Activated CD4-positive, alpha-beta T cell treated with anti-CD3 and anti-CD28 coated beads, Interleukin-2, amount 10 ng/mL, durations not matched to agents 7 days and 5 days (primary cell): ENCODE measurements at regions of chr1 and their contacts with region 1.

Region 1: GRCh38 chr1:236156512-236157208 is 14.3 kb downstream of the GPR137B start:
- DNase-seq: peak; percentile 18
- H3K4me3 Mint-ChIP-seq: no peak overlapping the region
- H3K27ac Mint-ChIP-seq: no peak overlapping the region
- H3K4me1 Mint-ChIP-seq: peaks cover 16% of the 10 kb centered on the region
- H3K27me3 Mint-ChIP-seq: no peaks in the 10 kb centered on the region

Region 2: DNA sequence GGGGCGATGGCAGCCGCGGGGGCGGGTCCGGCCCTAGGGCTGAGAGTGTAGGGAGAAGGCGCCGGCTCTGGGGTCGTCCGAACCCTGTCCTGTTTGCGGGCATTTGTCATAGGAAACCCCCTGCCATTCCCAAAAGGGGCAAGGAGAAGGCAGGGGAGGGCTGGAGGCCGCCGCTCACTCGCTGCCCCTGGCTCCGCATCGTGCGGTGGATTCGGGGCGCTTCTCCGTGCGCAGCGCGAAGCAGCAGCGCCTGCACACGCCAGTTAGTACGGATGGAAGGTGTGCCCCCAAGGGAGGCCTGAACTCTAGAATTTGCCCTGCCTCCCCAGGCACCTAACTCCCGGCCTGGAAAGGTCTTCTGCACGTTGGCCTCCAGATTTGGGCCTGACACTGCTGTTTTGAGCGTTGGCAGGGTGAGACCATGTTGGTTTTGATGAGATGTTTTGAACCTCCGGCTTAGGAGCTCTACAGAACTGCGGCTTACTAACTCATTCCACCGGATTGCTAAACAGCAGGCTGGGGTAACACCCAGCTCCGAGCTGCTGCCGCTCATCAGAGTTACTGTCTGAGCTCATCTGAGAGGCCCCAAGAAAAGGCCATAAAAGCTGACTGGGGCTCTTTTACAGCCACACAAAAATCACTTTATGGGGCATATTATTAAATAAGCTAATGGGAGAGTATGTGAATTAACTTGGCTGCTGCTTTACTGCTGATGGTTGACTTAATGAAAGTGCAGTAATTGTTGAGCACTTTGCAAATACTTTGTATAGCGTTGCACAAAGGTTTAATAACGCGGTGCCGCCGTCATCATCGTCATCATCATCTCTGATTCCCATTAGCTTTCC is 13.3 kb before region 1 on chr1:
- CTCF ChIA-PET with region 1: interaction called, 13 read pairs
- POLR2A ChIA-PET with region 1: interaction called, 3 read pairs
- DNase-seq: peak; percentile 27
- H3K4me3 Mint-ChIP-seq: peak overlapping the region; percentile 93
- H3K27ac Mint-ChIP-seq: peak overlapping the region; percentile 16
- H3K4me1 Mint-ChIP-seq: peaks cover 27% of the 10 kb centered on the region
- H3K27me3 Mint-ChIP-seq: peaks cover 33% of the 10 kb centered on the region

Region 3: DNA sequence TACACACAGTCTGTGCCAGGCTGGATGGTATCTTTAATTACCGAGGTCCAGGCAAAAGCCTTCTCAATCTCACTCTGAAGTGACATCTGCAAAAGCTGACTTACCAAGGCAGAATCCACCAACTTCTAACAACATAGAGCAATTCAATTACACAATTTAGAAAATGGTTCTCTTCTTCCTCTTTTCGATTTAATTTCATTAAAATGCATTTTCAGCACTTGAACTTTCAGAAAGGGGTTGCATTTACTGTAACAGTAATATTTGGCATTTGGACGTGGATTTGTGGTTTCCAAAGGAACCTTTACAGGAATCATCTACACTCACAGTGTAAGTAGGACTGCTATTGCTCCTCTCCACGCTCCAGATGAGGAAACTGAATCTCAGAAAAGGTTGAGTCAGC is 71.8 kb after region 1 on chr1:
- CTCF ChIA-PET with region 1: no interaction called
- POLR2A ChIA-PET with region 1: no interaction called
- DNase-seq: no peak
- H3K4me3 Mint-ChIP-seq: no peak overlapping the region
- H3K27ac Mint-ChIP-seq: no peak overlapping the region
- H3K4me1 Mint-ChIP-seq: no peaks in the 10 kb centered on the region
- H3K27me3 Mint-ChIP-seq: no peaks in the 10 kb centered on the region